Activated CD4-positive, alpha-beta memory T cell treated with anti-CD3 and anti-CD28 coated beads for 36 hours (primary cell): ENCODE measurements at regions of chr5 and their contacts with region 1.

Region 1: DNA sequence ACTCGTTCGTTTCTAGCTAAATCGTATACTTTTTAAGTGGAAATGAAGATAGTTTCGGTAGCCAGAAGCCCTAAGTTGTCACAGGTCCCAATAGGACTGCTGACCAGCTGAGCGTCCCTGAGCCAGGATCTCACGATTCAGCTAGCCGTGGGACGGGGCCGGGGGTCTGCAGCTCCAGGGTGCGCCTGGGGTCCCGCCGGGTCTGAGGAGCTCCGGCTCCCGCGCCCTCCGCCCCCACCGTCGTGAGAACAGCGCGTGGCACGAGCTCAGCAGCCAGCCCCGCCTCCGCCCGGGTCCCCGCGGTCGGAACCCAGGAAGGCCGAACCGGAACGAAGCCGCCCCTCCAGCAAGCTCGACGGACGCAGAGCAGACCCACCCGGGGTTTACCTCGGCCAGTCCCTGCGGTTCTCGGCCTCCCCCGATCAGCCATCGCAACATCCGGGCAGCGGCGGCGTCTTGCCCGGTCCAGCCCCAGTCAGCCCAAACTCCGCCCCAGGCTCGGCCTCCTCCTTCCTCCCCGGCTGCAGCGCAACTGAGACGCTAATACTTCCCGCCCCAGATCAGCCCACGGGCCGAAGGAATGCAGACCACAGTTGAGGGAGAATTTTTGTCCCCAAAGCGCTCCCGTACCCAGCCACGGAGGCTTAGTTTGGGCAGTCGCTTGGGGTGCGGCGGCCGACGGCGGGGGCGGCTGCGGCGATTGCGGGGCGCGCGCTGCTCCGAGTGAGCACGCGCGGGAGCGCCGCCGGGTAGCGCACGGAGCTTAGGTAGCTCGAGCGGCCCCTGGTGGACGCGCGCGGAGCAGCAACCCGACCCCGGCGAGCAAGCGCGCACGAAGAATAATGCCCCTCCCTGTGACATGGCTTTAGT is at the start of gene WDR41:
- DNase-seq: peak; percentile 90
- H3K4me3 Mint-ChIP-seq: peak within 1 kb of the TSS; percentile 76
- H3K27ac Mint-ChIP-seq: peak within 1 kb of the TSS; percentile 86
- H3K4me1 Mint-ChIP-seq: peaks cover 23% of the 10 kb centered on the region
- H3K27me3 Mint-ChIP-seq: peaks cover 7% of the 10 kb centered on the region
- total RNA-seq, gene WDR41: 30.5 to 32.6 TPM

Region 2: GRCh38 chr5:76867827-76868693 is 624.0 kb before region 1 on chr5:
- CTCF ChIA-PET with region 1: interaction called, 12 read pairs
- POLR2A ChIA-PET with region 1: no interaction called
- intact Hi-C with region 1: loop called (anchors 1 kb)
- DNase-seq: peak; percentile 74
- H3K4me3 Mint-ChIP-seq: no peak overlapping the region
- H3K27ac Mint-ChIP-seq: no peak overlapping the region
- H3K4me1 Mint-ChIP-seq: no peaks in the 10 kb centered on the region
- H3K27me3 Mint-ChIP-seq: no peaks in the 10 kb centered on the region

Region 3: GRCh38 chr5:77076961-77077823 is 414.8 kb before region 1 on chr5:
- CTCF ChIA-PET with region 1: interaction called, 23 read pairs
- POLR2A ChIA-PET with region 1: no interaction called
- intact Hi-C with region 1: no loop called
- DNase-seq: peak; percentile 71
- H3K4me3 Mint-ChIP-seq: peak overlapping the region; percentile 50
- H3K27ac Mint-ChIP-seq: no peak overlapping the region
- H3K4me1 Mint-ChIP-seq: peaks cover 5% of the 10 kb centered on the region
- H3K27me3 Mint-ChIP-seq: no peaks in the 10 kb centered on the region

Region 4: DNA sequence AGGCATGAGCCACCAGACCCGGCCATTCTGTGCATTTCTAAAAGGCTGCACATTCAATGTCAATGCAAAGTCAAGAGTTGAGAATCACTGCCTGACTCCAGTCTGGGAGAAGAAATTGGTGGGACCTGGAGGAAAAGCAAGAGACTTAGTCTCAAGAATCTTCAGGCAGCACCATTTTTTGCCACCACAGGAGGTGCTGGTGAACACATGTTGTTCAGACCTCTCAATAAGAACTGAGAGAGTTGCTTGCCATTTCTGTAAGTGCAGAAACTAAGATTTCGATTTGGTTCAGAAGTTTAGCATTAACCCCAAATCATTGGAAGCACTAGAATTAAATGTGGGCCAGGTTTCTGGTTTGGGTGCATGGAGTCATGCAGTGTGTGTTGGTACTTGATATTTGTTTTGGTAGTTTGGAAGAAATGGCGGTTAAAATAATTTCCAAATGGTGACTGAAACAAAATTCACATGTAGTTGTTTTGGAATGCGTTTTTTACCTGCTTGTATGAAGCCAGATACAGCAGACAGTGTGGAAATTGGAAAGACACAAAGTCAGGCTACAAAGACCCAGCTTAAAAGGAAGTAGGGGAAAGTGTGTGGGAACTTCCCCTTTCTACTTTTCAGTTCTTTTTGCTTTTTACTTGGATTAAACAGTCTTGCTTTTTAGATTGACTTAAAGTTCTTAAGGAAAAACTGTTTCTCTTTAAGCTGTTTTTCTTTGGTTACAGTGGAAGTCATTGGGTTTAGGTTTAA is 261.1 kb before region 1 on chr5:
- CTCF ChIA-PET with region 1: no interaction called
- POLR2A ChIA-PET with region 1: no interaction called
- intact Hi-C with region 1: loop called (anchors 5 kb)
- DNase-seq: no peak
- H3K4me3 Mint-ChIP-seq: no peak overlapping the region
- H3K27ac Mint-ChIP-seq: no peak overlapping the region
- H3K4me1 Mint-ChIP-seq: no peaks in the 10 kb centered on the region
- H3K27me3 Mint-ChIP-seq: peaks cover 6% of the 10 kb centered on the region

Region 5: GRCh38 chr5:78294248-78295034 is 802.4 kb after region 1 on chr5 and contains the start of gene AP3B1:
- CTCF ChIA-PET with region 1: no interaction called
- POLR2A ChIA-PET with region 1: interaction called, 4 read pairs
- intact Hi-C with region 1: loop called (anchors 10 kb)
- DNase-seq: peak; percentile 98
- H3K4me3 Mint-ChIP-seq: peak within 1 kb of the TSS; percentile 95
- H3K27ac Mint-ChIP-seq: peak within 1 kb of the TSS; percentile 96
- H3K4me1 Mint-ChIP-seq: peaks cover 37% of the 10 kb centered on the region
- H3K27me3 Mint-ChIP-seq: no peaks in the 10 kb centered on the region
- total RNA-seq, gene AP3B1: 36.5 to 40.2 TPM